Common myeloid progenitor, CD34-positive (primary cell): ENCODE measurements at regions of chr6 and their contacts with region 1.

Region 1: GRCh38 chr6:30489081-30490025 is at the start of gene HLA-E:
- DNase-seq: peak; percentile 99 to 100 (median 100)
- H3K4me3 ChIP-seq: peak within 1 kb of the TSS; percentile 95 to 100 (median 98)
- H3K27ac ChIP-seq: peak within 1 kb of the TSS; percentile 89 to 93
- H3K4me1 ChIP-seq: peaks cover 10 to 41% (median 29%) of the 10 kb centered on the region in 4 experiments
- H3K27me3 ChIP-seq: no peaks in the 10 kb centered on the region

Region 2: GRCh38 chr6:30508890-30509736 is 19.8 kb after region 1 on chr6:
- CTCF ChIA-PET with region 1: interaction called, 80 read pairs
- POLR2A ChIA-PET with region 1: interaction called, 7 read pairs
- DNase-seq: peak; percentile 84 to 94 (median 91)
- H3K4me3 ChIP-seq: peak overlapping the region in 6 of 7 experiments; percentile 16 to 72 (median 42)
- H3K27ac ChIP-seq: peak overlapping the region; percentile 17 to 64
- H3K4me1 ChIP-seq: peaks cover 35 to 74% (median 48%) of the 10 kb centered on the region in 4 experiments
- H3K27me3 ChIP-seq: no peaks in the 10 kb centered on the region

Region 3: GRCh38 chr6:30515932-30516753 is 26.8 kb after region 1 on chr6:
- CTCF ChIA-PET with region 1: interaction called, 80 read pairs
- POLR2A ChIA-PET with region 1: interaction called, 12 read pairs
- DNase-seq: peak; percentile 100
- H3K4me3 ChIP-seq: peak overlapping the region; percentile 14 to 76 (median 53)
- H3K27ac ChIP-seq: peak overlapping the region; percentile 98 to 99
- H3K4me1 ChIP-seq: peaks cover 8 to 62% (median 44%) of the 10 kb centered on the region in 4 experiments
- H3K27me3 ChIP-seq: no peaks in the 10 kb centered on the region

Region 4: DNA sequence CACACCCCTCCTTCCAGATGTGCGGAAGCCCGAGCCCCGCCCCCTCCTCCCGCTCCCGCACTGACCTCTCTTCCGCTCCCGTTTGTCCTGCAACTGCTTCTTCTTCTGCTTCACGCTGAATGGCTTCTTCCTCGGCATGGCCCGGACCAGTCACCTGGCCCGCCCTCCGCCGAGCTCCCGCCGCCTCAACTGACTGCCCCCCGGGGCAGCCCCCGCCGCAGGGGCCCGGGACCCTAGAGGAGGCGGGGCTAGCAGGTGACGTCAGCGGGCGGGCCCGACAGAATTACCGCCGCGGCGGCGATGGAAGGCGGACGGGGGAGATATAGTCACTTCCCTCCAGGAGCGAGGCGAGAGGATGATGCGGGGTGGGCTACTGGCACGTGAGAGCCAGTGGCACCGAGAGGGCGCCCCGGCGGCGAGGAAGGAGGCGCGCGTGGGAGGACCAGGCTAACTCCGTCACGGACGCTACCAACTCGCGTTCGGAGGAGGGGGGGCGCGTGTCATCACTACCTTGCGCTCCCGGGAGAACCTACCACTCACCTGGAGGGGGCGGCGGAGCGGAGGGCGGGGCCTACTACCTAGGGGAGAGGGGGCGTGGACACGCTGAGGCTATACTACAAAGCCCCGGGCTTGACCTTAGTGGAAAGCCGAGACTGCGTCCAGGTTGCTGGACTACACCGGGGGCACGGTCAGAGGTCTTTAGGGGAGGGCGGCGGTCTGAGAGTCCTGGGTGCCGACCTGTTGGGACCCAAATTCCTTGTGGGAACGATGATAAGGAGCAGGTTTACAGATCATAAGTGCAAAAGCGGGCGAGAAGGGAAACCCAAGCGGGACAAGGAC is 66.9 kb after region 1 on chr6 and contains the start of gene GNL1:
- CTCF ChIA-PET with region 1: interaction called, 259 read pairs
- POLR2A ChIA-PET with region 1: interaction called, 4 read pairs
- DNase-seq: peak; percentile 96 to 98 (median 97)
- H3K4me3 ChIP-seq: peak within 1 kb of the TSS; percentile 86 to 95 (median 89)
- H3K27ac ChIP-seq: peak within 1 kb of the TSS; percentile 88 to 93
- H3K4me1 ChIP-seq: peaks cover 8 to 30% (median 23%) of the 10 kb centered on the region in 4 experiments
- H3K27me3 ChIP-seq: no peaks in the 10 kb centered on the region

Region 5: DNA sequence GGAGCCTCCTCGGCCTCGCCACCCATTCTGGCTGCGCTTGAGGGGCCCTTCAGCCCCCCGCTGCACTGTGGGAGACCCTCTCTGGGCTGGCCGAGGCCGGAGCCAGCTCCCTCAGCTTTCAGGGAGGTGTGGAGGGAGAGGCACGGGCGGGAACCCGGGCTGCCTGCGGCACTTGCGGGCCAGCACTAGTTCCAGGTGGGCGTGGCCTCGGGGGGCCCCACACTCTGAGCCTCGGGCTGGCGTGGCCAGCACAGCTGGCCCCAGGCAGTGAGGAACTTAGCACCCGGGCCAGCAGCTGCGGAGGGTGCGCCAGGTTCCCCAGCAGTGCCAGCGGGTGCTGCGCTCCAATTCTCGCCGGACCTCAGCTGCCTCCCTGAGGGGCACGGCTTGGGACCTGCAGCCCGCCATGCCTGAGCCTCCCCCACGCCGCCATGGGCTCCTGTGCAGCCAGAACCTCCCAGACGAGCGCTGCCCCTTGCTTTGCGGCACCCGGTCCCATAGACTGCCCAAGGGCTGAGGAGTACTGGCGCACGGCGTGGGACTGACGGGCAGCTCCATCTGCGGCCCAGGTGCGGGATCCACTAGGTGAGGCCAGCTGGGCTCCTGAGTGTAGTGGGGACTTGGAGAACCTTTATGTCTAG is 527.4 kb after region 1 on chr6:
- CTCF ChIA-PET with region 1: no interaction called
- POLR2A ChIA-PET with region 1: no interaction called
- DNase-seq: no peak
- H3K4me3 ChIP-seq: no peak overlapping the region
- H3K27ac ChIP-seq: no peak overlapping the region
- H3K4me1 ChIP-seq: no peaks in the 10 kb centered on the region
- H3K27me3 ChIP-seq: peaks cover 0 to 12% (median 3%) of the 10 kb centered on the region in 5 experiments